GM12878 (cell line): ENCODE measurements at regions of chr7 and their contacts with region 1.

Region 1: DNA sequence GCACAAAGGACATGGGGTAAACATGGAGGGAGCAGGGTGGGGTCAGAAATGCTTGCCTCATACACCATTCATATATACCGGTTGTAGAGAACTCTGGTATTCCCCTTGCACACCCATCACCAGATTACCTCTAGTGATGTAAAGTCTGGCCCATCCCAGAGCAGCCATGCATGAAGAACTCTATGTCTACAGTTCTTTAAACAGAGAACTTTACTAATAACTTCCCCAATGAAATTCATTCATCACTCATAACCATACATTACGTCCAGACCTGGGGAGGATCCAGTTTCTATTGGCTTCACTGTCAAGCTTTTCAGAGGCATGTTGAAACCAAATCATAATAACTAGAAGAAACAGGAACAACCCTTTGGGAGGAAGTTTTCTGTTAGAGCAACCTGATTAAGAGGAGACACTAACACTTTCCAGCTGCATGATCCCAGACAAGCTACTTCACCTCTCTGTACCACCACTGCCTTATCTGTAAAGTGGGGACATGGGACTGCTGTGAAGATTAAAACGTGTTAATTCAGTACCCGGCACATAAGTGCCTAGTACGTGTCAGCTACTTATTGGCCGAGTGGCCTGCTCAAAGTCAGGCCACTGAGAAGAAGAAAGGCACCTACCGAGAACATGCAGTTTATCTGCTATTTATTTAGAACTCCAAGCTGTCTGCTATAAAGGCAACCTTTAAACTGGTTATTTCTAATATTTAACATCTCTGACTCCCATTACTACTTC is 59.7 kb downstream of the IGF2BP3 start:
- DNase-seq: peak; percentile 89
- ATAC-seq: peak; percentile 97
- H3K4me3 ChIP-seq: no peak overlapping the region; the same call in 1 of the 2 replicates
- H3K27ac ChIP-seq: peak overlapping the region; percentile 82
- H3K4me1 ChIP-seq: peaks cover 20% of the 10 kb centered on the region
- H3K27me3 ChIP-seq: no peaks in the 10 kb centered on the region
- CTCF ChIP-seq: no peak
- EP300 ChIP-seq: peak; percentile 65 to 69; a peak in 3 of 4 replicates
- POLR2A ChIP-seq: no peak
- RAD21 ChIP-seq: no peak

Region 2: GRCh38 chr7:22969010-22969431 is 441.6 kb before region 1 on chr7:
- CTCF ChIA-PET with region 1: no interaction called
- POLR2A ChIA-PET with region 1: no interaction called
- RAD21 ChIA-PET with region 1: no interaction called
- SMC1A ChIA-PET with region 1: no interaction called
- in situ Hi-C with region 1: no loop called
- intact Hi-C with region 1: no loop called
- DNase-seq: no peak
- ATAC-seq: no peak
- H3K4me3 ChIP-seq: no peak overlapping the region
- H3K27ac ChIP-seq: no peak overlapping the region
- H3K4me1 ChIP-seq: no peaks in the 10 kb centered on the region
- H3K27me3 ChIP-seq: no peaks in the 10 kb centered on the region
- CTCF ChIP-seq: no peak
- EP300 ChIP-seq: no peak
- POLR2A ChIP-seq: no peak
- RAD21 ChIP-seq: no peak

Region 3: GRCh38 chr7:23373151-23374004 is 37.2 kb before region 1 on chr7:
- CTCF ChIA-PET with region 1: interaction called, 3 read pairs
- POLR2A ChIA-PET with region 1: interaction called, 5 read pairs
- RAD21 ChIA-PET with region 1: no interaction called
- SMC1A ChIA-PET with region 1: interaction called, 13 read pairs
- in situ Hi-C with region 1: no loop called
- intact Hi-C with region 1: loop called (anchors 1 kb)
- DNase-seq: peak; percentile 76
- ATAC-seq: peak; percentile 74
- H3K4me3 ChIP-seq: peak overlapping the region; percentile 41; the same call in 1 of the 2 replicates
- H3K27ac ChIP-seq: peak overlapping the region; percentile 52
- H3K4me1 ChIP-seq: peaks cover 40% of the 10 kb centered on the region
- H3K27me3 ChIP-seq: no peaks in the 10 kb centered on the region
- CTCF ChIP-seq: no peak
- EP300 ChIP-seq: peak; percentile 51 to 95; a peak in 3 of 4 replicates
- POLR2A ChIP-seq: no peak
- RAD21 ChIP-seq: no peak